ENCODE measurements at regions of chr15 and their contacts with region 1.

Region 1: GRCh38 chr15:99409097-99409473 is 156.7 kb upstream of the MEF2A start:
- DNase-seq: peak in 1 of 3 donors; percentile 66
- ATAC-seq: peak; percentile 84 to 96 (median 90)
- H3K4me3 ChIP-seq: no peak overlapping the region
- H3K27ac ChIP-seq: no peak overlapping the region
- H3K4me1 ChIP-seq: peaks cover 0 to 5% (median 0%) of the 10 kb centered on the region in 4 donors
- H3K27me3 ChIP-seq: no peaks in the 10 kb centered on the region
- CTCF ChIP-seq: peak; percentile 40 to 50 (median 44)
- POLR2A ChIP-seq: no peak

Region 2: DNA sequence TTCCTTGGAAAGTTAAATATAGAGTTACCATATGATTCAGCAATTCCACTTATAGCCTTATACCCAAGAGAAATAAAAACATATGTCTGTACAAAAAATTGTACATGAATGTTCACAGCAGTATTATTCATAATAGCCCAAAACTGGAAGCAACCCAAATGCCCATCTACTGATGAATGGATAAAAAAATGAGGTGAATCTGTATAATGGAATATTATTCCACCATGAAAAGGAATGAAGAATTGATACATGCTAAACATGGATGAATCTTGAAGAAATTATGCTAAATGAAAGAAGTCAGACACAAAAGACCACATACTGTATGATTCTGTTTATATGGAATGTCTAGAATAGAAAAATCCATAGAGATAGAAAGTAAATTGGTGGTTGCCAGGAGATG is 221.1 kb before region 1 on chr15:
- intact Hi-C with region 1: no loop called
- DNase-seq: no peak
- ATAC-seq: no peak
- H3K4me3 ChIP-seq: no peak overlapping the region
- H3K27ac ChIP-seq: no peak overlapping the region
- H3K4me1 ChIP-seq: no peaks in the 10 kb centered on the region
- H3K27me3 ChIP-seq: no peaks in the 10 kb centered on the region
- CTCF ChIP-seq: no peak
- POLR2A ChIP-seq: no peak

Region 3: GRCh38 chr15:99704444-99704838 is 295.4 kb after region 1 on chr15:
- intact Hi-C with region 1: loop called in 1 of 2 experiments (anchors 10 kb)
- DNase-seq: no peak
- ATAC-seq: peak; percentile 69 to 81 (median 76)
- H3K4me3 ChIP-seq: no peak overlapping the region
- H3K27ac ChIP-seq: peak overlapping the region; percentile 85 to 92 (median 90)
- H3K4me1 ChIP-seq: peaks cover 0 to 30% (median 4%) of the 10 kb centered on the region in 4 donors
- H3K27me3 ChIP-seq: no peaks in the 10 kb centered on the region
- CTCF ChIP-seq: peak; percentile 77 to 85 (median 82)
- POLR2A ChIP-seq: no peak